ENCODE measurements at regions of chr2 and their contacts with region 1.

Region 1: DNA sequence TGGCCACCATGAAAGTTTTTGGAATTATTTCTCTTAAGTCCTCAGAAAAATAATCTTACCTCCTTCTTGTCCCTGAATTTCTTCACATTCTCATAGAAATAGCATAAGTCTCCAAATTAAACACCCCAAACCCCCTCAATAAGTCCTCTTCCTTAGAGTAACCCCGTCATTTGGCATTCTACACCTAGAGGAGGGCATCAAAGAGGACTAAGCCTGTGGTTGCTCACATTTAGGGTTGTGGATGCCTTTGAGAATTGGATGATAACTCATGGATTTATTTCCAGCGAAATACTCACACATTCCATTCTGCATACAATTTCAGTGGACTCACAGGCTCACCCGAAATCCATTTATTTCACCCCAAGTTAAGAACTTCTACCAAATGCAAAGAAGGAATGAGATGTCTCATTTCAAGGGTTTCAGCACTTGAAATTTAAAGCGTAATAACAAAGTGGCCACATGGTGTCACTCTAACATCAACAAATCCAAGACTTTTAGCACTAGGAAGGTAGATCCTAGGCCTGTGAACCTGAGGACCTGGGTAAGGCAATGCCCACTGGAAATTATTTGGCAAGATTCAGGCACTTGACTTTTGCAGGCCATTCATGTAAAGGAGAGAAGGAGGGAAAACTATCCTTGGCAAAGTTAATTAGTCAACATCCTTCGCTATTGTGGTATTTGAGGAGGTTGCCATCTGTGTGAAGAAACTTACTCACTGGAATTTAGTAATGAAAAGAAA is 24.6 kb downstream of the DYTN start:
- ATAC-seq: peak in 7 of 8 experiments; percentile 42 to 85 (median 62)
- H3K4me3 ChIP-seq: no peak overlapping the region
- H3K27ac ChIP-seq: no peak overlapping the region
- H3K4me1 ChIP-seq: no peaks in the 10 kb centered on the region

Region 2: GRCh38 chr2:206572725-206573124 is 120.8 kb before region 1 on chr2:
- in situ Hi-C with region 1: no loop called
- ATAC-seq: no peak
- H3K4me3 ChIP-seq: no peak overlapping the region
- H3K27ac ChIP-seq: no peak overlapping the region
- H3K4me1 ChIP-seq: no peaks in the 10 kb centered on the region

Region 3: DNA sequence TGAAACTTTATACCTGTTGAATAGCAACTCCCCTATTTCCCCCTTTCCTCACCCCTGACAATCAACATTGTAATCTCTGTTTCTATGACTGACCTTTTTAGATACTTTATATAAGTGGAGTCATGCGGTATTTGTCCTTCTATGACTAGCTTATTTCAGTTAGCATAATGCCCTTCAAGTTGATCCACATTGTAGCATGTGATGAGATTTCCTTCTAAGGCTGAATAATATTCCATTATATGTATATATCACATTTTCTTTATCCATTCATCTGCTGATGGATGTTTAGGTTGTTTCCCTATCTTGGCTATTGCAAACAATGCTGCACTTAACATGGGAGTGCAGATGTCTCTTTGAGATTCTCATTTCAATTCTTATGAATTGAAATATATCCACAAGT is 81.3 kb after region 1 on chr2:
- in situ Hi-C with region 1: loop called in 1 of 9 experiments (anchors 10 kb)
- ATAC-seq: no peak
- H3K4me3 ChIP-seq: no peak overlapping the region
- H3K27ac ChIP-seq: no peak overlapping the region
- H3K4me1 ChIP-seq: no peaks in the 10 kb centered on the region

Region 4: GRCh38 chr2:206832873-206833272 is 139.3 kb after region 1 on chr2:
- in situ Hi-C with region 1: no loop called
- ATAC-seq: no peak
- H3K4me3 ChIP-seq: no peak overlapping the region
- H3K27ac ChIP-seq: no peak overlapping the region
- H3K4me1 ChIP-seq: peaks cover 0 to 12% of the 10 kb centered on the region in 2 donors